Calu3 (cell line): ENCODE measurements at regions of chr15 and their contacts with region 1.

Region 1: DNA sequence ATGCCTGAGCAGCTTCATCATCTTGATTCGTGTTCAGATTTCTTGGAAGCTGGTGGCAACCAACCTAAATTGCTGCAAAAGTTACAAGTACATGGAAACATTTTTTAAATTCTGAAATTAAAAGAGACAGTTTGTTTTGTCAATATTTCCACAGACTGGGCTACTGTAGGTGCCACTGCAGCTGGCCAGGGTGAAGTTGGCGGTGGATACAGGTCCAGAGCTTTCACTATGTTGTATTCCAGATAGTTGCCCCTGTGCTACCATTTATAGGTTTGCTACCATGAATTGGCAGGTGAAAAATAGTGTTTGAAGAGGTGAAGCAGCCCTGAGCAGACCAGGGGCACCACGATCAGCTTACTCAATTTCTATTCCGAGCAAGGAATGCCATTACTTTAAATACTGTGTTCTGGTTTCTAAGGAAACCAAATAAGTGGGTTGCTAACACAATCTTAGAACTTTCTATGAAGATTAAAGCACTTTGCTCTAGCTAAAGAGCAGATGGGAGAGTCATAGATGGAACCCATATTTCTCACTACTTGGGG is 21.2 kb upstream of the SHC4 start:
- DNase-seq: no peak
- H3K4me3 Mint-ChIP-seq: no peak overlapping the region
- H3K27ac Mint-ChIP-seq: no peak overlapping the region
- H3K4me1 Mint-ChIP-seq: peaks cover 20% of the 10 kb centered on the region
- H3K27me3 Mint-ChIP-seq: no peaks in the 10 kb centered on the region
- CTCF ChIP-seq: no peak

Region 2: DNA sequence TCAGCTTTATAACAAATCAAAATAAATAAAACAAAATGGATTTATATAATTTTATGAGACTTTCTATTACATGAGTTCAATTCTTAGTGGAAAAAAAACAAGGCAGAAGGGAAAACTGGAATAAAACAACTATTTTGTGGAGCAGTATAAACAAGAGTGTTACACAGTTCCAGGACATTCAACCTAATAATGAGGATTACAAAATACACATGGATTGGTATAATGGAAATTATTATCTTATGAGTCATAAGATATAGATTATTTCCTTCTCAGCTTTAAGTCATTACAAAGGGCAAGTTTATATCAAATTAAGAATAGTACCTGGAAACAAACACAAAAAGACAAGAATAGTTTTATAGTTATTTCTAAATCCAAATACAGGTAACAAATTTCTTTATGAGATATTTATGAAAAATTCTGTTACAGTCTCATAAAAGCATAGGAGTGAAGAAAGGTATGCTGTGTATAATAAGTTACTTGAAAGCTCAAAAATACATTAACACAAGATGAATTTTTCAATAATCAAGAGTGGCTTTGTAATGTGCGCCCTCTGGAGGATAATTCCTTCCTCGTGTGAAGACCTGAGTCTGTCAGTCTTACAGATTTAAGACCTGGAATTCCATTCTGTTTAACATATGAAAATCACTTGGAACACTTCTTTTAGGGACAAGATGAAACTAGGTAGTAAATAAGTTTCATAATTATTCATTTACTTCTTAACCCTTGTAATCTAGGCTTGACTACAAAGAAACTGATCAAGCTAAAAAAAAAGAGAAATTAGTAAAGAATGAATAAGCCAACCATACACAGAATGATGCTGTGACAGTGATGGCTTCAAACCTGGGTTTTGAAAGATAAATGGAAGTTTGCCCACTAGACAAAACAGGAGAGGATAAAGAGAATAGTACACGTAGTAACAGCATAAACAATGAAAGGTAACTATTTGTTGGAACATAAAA is 161.0 kb after region 1 on chr15:
- CTCF ChIA-PET with region 1: no interaction called
- intact Hi-C with region 1: loop called (anchors 10 kb)
- DNase-seq: peak; percentile 60
- H3K4me3 Mint-ChIP-seq: peak overlapping the region; percentile 23
- H3K27ac Mint-ChIP-seq: peak overlapping the region; percentile 43
- H3K4me1 Mint-ChIP-seq: peaks cover 29% of the 10 kb centered on the region
- H3K27me3 Mint-ChIP-seq: no peaks in the 10 kb centered on the region
- CTCF ChIP-seq: peak; percentile 40